BJ (cell line): ENCODE measurements at regions of chr1 and their contacts with region 1.

Region 1: DNA sequence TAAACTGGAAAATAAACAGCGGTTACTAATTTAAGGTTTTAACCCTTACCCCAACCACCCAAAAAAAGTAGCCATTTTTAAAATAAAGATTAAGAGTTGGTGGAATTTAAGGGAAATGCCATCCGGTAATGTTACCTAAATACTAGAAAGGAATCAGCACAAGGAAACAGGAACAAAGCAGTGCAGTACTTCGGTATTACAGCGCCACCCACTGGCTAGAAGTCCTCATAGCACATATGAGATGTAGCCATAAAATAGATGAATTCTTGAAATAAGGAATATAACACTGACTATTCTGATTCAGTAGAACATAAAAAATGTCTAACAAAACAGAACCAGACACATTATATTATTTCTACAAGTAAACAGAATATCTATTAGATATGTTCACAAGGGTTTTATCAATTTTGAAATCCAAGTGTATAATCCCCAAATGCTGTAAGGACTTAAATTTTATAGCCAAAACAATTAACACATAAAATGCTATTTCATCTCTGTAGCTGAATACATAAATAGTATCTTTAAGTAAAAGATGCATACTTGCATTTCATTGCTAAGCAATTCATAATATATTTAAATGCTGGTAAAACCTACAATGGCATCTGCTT is 58.8 kb downstream of the FRRS1 start:
- DNase-seq: peak; percentile 9
- H3K4me3 ChIP-seq: no peak overlapping the region
- H3K27me3 ChIP-seq: no peaks in the 10 kb centered on the region
- CTCF ChIP-seq: peak; percentile 79

Region 2: DNA sequence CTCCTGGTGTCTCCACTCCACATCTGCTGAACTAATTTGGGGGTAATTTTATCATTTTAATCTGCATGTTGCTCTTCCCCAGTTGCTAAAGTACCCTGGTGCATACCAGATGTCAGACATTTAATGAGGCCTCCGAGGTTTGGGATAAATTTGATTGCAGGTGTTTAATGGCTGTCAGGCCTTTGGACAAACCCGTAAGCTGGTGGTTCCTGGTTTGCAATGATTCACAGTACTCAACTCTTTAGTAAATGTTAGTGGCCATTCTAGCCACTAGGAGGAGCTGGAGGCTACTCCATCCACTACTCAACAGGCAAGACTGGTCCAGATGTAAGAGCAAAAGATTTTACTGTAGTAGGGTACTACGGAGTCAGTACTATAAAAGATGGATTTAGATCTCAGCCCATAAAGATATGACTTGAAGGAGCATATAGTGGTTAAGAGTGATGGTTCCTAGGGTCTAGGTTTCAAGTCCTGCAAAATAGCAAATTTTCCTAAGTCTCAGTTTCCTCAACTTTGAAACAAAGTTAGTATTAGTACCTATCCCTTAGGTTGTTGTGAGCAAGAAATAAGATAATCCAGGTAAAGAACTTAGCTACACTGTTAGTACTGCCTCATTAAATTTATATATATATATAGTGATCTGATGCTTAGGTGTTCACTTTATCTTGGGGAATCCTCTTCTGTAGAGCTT is 913.3 kb before region 1 on chr1:
- CTCF ChIA-PET with region 1: interaction called, 12 read pairs
- POLR2A ChIA-PET with region 1: no interaction called
- DNase-seq: peak; percentile 26
- H3K4me3 ChIP-seq: no peak overlapping the region
- H3K27me3 ChIP-seq: no peaks in the 10 kb centered on the region; the same call in 1 of the 2 replicates
- CTCF ChIP-seq: peak; percentile 80

Region 3: DNA sequence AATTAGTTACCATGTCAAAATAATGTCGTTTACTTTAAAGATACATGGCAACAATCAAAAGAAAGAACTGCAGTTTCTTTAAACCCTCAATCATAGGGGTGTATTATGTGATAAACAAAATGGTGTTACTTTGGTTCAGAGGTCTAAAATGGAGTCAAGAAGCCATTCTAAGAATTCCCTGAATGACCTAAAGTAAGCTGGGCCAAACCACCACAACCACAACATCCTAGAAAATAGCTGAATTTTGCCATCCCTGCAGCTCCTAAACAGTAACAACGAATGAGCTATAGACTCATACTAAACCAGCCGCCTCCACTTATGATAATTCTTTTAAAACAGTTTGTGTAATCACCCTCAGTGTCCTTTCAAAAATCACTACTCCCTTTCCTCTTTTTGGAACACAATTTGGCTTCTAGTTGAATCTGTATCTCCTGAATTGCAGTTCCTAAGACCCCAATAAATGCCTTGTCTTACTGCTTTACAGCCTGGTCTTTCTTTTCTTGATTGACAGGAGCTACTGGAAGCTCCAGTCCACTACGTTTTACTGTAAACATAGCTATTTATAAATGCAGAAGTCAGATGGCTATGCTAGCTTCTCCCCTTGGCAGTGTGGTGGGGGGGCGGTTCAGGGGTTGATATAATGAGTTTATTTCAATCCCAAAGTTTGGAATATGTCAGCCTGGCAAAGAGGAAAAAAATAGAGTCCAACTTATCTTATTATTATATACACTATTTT is 359.1 kb before region 1 on chr1:
- CTCF ChIA-PET with region 1: no interaction called
- POLR2A ChIA-PET with region 1: no interaction called
- DNase-seq: no peak
- H3K4me3 ChIP-seq: no peak overlapping the region
- H3K27me3 ChIP-seq: no peaks in the 10 kb centered on the region
- CTCF ChIP-seq: no peak

Region 4: GRCh38 chr1:99691175-99691574 is 16.5 kb before region 1 on chr1:
- CTCF ChIA-PET with region 1: interaction called, 19 read pairs
- POLR2A ChIA-PET with region 1: no interaction called
- DNase-seq: no peak
- H3K4me3 ChIP-seq: no peak overlapping the region
- H3K27me3 ChIP-seq: no peaks in the 10 kb centered on the region; the same call in 1 of the 2 replicates
- CTCF ChIP-seq: no peak